Activated CD4-positive, alpha-beta memory T cell treated with anti-CD3 and anti-CD28 coated beads, Interleukin-2, amount 10 ng/mL, durations not matched to agents 7 days and 5 days (primary cell): ENCODE measurements at regions of chr3 and their contacts with region 1.

Region 1: DNA sequence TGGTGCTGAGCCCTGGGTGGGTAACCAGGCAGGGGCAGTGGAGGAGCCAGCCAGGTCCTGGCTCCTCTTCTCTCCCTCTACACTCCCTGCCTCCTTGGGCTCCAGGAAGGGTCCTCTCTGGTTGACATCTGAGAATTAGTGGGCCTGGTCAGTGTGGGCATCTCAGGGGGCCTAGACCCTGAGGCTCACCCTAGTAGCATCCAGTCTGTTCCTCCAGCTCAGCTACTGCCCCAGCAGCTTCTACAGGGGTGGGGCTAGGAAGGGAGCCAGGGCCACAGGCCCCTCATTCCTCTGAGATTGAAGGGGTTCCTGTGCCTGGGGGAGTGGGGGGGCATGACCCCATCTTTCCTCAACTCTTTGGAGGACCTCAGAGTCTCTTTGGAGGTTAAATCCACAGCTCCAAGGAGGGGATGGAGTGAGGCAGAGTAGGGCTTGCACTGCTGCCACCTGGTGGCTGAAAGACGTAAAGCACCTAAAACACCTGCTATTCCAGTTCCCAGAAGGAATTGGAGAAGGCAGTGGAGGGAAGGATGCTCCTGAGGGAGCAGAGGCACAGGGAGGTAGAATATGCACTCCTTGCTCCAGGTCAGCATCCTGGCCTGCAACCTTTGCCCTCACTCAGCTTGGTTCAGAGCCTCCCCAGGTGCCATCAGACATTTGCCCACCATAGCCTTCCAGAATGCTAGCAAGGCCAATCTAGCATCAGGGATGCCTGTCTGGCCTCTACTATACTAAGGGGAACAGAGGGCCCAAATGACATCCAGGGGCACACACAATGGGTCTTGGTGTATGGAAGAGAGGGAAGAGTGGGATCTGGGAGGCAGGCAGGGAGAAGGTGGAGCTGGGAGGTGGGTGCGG is 25.1 kb downstream of the C3orf18 start:
- DNase-seq: peak; percentile 67
- H3K4me3 Mint-ChIP-seq: no peak overlapping the region
- H3K27ac Mint-ChIP-seq: no peak overlapping the region
- H3K4me1 Mint-ChIP-seq: no peaks in the 10 kb centered on the region
- H3K27me3 Mint-ChIP-seq: peaks cover 20% of the 10 kb centered on the region

Region 2: GRCh38 chr3:49747792-49748480 is 794.5 kb before region 1 on chr3:
- CTCF ChIA-PET with region 1: no interaction called
- POLR2A ChIA-PET with region 1: no interaction called
- DNase-seq: no peak
- H3K4me3 Mint-ChIP-seq: no peak overlapping the region
- H3K27ac Mint-ChIP-seq: no peak overlapping the region
- H3K4me1 Mint-ChIP-seq: no peaks in the 10 kb centered on the region
- H3K27me3 Mint-ChIP-seq: no peaks in the 10 kb centered on the region

Region 3: DNA sequence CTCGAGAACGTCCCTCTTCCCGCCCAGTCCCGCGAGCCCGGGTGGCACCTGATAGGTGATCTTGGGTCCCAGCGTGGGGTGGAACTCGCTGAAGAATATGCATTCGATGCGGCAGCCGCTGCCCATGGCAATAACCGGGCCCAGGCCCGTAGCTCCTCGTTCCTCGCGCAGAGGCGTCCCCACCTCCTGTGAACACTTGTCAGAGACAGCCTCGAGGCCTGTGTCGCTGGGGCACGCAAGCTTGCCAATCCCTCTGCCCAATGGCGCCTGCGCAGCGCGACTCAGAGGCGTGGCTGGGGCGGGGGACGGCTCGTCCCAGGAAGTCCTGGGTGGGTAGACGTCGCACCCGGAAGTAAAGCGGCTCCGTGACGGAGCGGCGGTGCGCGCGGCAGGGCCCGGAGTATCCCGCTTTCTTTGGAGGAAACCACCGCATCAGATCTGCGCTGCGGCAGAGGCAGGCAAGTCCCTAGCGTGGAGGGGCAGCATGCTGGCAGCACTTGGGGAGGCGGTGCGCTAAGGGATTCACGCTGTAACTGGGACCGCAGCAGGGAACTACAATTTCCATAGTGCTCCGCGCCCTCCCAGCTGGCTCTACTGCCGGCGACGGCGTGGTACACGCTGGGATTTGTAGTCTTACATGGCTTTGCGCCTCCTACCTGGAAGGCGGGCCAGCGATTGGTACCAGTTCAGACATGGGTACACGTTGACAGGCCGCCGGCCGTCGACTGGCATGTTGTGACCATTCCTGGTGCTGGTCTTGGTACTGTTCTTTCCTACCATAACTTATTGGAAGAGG is 191.7 kb before region 1 on chr3 and contains the starts of genes CYB561D2 and NPRL2:
- CTCF ChIA-PET with region 1: interaction called, 35 read pairs
- POLR2A ChIA-PET with region 1: interaction called, 4 read pairs
- DNase-seq: peak; percentile 99
- H3K4me3 Mint-ChIP-seq: peak within 1 kb of the TSS; percentile 91
- H3K27ac Mint-ChIP-seq: peak within 1 kb of the TSS; percentile 93
- H3K4me1 Mint-ChIP-seq: peaks cover 66% of the 10 kb centered on the region
- H3K27me3 Mint-ChIP-seq: no peaks in the 10 kb centered on the region
- total RNA-seq, gene CYB561D2: 37.1 to 39.7 TPM
- total RNA-seq, gene NPRL2: 48.8 to 50.1 TPM

Region 4: GRCh38 chr3:50436114-50436674 is 106.2 kb before region 1 on chr3:
- CTCF ChIA-PET with region 1: interaction called, 14 read pairs
- POLR2A ChIA-PET with region 1: no interaction called
- DNase-seq: peak; percentile 83
- H3K4me3 Mint-ChIP-seq: no peak overlapping the region
- H3K27ac Mint-ChIP-seq: no peak overlapping the region
- H3K4me1 Mint-ChIP-seq: peaks cover 1% of the 10 kb centered on the region
- H3K27me3 Mint-ChIP-seq: peaks cover 5% of the 10 kb centered on the region

Region 5: GRCh38 chr3:50519471-50520089 is 22.8 kb before region 1 on chr3:
- CTCF ChIA-PET with region 1: interaction called, 10 read pairs
- POLR2A ChIA-PET with region 1: no interaction called
- DNase-seq: peak; percentile 80
- H3K4me3 Mint-ChIP-seq: no peak overlapping the region
- H3K27ac Mint-ChIP-seq: no peak overlapping the region
- H3K4me1 Mint-ChIP-seq: peaks cover 9% of the 10 kb centered on the region
- H3K27me3 Mint-ChIP-seq: peaks cover 17% of the 10 kb centered on the region

Region 6: DNA sequence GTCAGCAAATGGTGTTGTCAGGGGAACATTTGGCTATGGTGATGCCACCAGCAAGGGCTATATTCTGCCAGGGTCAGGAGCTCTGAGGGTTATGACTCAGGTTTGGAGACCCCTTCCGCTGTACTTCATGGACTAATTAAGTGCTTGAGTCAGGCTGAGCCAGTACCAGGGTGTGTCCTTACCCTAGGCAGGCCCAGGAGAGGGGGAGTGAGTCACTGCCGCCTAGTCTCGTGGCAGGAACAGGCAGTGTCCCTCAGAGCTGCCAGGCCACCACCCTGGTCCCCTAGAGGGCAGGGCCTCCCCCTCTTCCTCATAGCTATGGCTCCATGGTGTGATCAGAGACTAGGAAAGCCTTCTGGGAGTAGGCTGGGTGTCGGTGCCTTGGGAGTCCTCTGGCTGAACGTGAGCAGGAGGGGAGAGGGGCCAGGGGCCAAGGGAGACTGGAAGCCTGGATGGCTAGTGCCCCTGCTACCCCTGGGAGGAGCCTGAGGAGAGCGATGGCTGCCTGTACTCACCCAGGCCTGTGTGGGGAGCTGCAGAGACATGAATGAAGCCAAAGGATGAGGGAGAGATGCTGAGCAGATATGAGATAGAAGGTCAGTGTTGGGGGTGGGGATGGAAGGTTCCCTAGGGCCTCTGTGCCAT is 85.1 kb after region 1 on chr3:
- CTCF ChIA-PET with region 1: no interaction called
- POLR2A ChIA-PET with region 1: no interaction called
- DNase-seq: no peak
- H3K4me3 Mint-ChIP-seq: no peak overlapping the region
- H3K27ac Mint-ChIP-seq: peak overlapping the region; percentile 40
- H3K4me1 Mint-ChIP-seq: peaks cover 97% of the 10 kb centered on the region
- H3K27me3 Mint-ChIP-seq: no peaks in the 10 kb centered on the region